MCF 10A (cell line): ENCODE measurements at regions of chr14 and their contacts with region 1.

Region 1: DNA sequence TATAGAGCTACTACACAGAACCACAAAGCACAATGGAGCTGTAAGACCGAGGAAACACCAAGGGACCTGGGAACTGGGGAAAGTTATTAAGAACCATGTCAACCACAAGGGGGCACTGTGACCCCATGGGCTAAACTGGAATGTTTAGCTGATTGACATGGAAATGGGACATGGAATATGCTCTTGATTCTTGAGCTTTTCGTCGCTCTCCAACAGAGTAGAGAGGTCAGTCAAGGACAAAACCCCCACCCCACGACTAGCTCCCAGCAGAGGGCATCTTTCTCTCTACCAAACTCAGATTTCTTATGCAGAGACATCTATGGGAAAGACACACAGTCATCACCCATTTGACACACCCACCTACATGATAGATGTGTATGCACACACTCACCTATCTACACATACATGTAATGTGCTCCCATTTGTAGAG is 10.1 kb downstream of the NDRG2 start:
- DNase-seq: peak; percentile 88
- H3K4me3 Mint-ChIP-seq: no peak overlapping the region
- H3K27ac Mint-ChIP-seq: no peak overlapping the region
- H3K4me1 Mint-ChIP-seq: peaks cover 7% of the 10 kb centered on the region
- H3K27me3 Mint-ChIP-seq: peaks cover 33% of the 10 kb centered on the region
- CTCF ChIP-seq: peak; percentile 90

Region 2: GRCh38 chr14:20427231-20428009 is 587.4 kb before region 1 on chr14:
- CTCF ChIA-PET with region 1: no interaction called
- POLR2A ChIA-PET with region 1: no interaction called
- intact Hi-C with region 1: no loop called
- DNase-seq: peak; percentile 67
- H3K4me3 Mint-ChIP-seq: no peak overlapping the region
- H3K27ac Mint-ChIP-seq: no peak overlapping the region
- H3K4me1 Mint-ChIP-seq: no peaks in the 10 kb centered on the region
- H3K27me3 Mint-ChIP-seq: no peaks in the 10 kb centered on the region
- CTCF ChIP-seq: no peak

Region 3: GRCh38 chr14:20989572-20990551 is 24.9 kb before region 1 on chr14 and contains the start of gene METTL17:
- CTCF ChIA-PET with region 1: interaction called, 213 read pairs
- POLR2A ChIA-PET with region 1: interaction called, 6 read pairs
- intact Hi-C with region 1: no loop called
- DNase-seq: peak; percentile 98
- H3K4me3 Mint-ChIP-seq: peak within 1 kb of the TSS; percentile 80
- H3K27ac Mint-ChIP-seq: peak within 1 kb of the TSS; percentile 91
- H3K4me1 Mint-ChIP-seq: peaks cover 24% of the 10 kb centered on the region
- H3K27me3 Mint-ChIP-seq: no peaks in the 10 kb centered on the region
- CTCF ChIP-seq: peak; percentile 7
- total RNA-seq, gene METTL17: 62.4 and 70.2 TPM in 2 replicates

Region 4: GRCh38 chr14:21025371-21026151 is 10.8 kb after region 1 on chr14:
- CTCF ChIA-PET with region 1: interaction called, 104 read pairs
- POLR2A ChIA-PET with region 1: interaction called, 3 read pairs
- intact Hi-C with region 1: no loop called
- DNase-seq: no peak
- H3K4me3 Mint-ChIP-seq: peak overlapping the region; percentile 51
- H3K27ac Mint-ChIP-seq: no peak overlapping the region
- H3K4me1 Mint-ChIP-seq: no peaks in the 10 kb centered on the region
- H3K27me3 Mint-ChIP-seq: peaks cover 20% of the 10 kb centered on the region
- CTCF ChIP-seq: no peak

Region 5: DNA sequence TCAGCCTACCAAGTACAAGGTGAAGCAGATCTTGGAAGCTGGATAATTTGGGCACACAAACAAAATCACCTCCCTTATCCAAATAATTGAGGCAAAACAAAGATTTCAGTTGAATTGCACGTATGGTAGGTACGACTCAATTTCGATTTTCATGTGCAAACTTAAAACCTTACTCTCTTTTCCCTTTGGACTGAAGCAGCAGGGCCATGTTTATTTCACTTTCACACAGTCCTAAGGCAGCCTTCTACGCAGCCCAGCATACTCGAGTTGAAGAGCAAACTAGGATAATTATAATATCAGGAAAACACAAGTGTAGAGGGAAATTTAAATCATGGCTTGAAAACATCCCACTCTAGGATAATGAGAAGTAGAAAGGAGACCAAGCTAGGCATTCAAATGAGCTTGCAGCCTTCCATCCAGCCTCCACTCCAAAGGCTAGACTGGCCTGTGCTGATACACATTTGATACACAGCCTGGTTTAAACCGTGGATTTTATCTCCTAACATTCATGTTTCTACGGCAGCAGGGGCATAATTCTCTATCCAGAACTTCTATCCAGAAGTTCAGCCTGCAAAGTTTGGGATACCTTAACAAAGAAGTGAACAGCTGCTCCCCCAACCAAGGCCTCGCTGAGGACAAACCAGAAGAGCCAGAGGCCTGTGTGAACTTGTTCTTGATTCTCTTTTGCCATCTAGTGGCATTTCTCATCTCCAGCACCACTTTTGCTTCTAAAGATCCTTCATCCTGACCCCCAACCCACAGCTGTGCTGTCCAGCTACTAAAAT is 25.0 kb after region 1 on chr14:
- CTCF ChIA-PET with region 1: interaction called, 391 read pairs
- POLR2A ChIA-PET with region 1: interaction called, 40 read pairs
- intact Hi-C with region 1: loop called (anchors 1 kb)
- DNase-seq: peak; percentile 69
- H3K4me3 Mint-ChIP-seq: no peak overlapping the region
- H3K27ac Mint-ChIP-seq: no peak overlapping the region
- H3K4me1 Mint-ChIP-seq: peaks cover 34% of the 10 kb centered on the region
- H3K27me3 Mint-ChIP-seq: no peaks in the 10 kb centered on the region
- CTCF ChIP-seq: peak; percentile 51

Region 6: GRCh38 chr14:21063479-21063878 is 48.7 kb after region 1 on chr14:
- CTCF ChIA-PET with region 1: interaction called, 48 read pairs
- POLR2A ChIA-PET with region 1: no interaction called
- intact Hi-C with region 1: no loop called
- DNase-seq: peak; percentile 31
- H3K4me3 Mint-ChIP-seq: no peak overlapping the region
- H3K27ac Mint-ChIP-seq: no peak overlapping the region
- H3K4me1 Mint-ChIP-seq: peaks cover 7% of the 10 kb centered on the region
- H3K27me3 Mint-ChIP-seq: peaks cover 11% of the 10 kb centered on the region
- CTCF ChIP-seq: no peak

Region 7: GRCh38 chr14:21092273-21093011 is 77.7 kb after region 1 on chr14:
- CTCF ChIA-PET with region 1: interaction called, 148 read pairs
- POLR2A ChIA-PET with region 1: interaction called, 3 read pairs
- intact Hi-C with region 1: loop called (anchors 1 kb)
- DNase-seq: peak; percentile 64
- H3K4me3 Mint-ChIP-seq: peak overlapping the region; percentile 19
- H3K27ac Mint-ChIP-seq: no peak overlapping the region
- H3K4me1 Mint-ChIP-seq: peaks cover 24% of the 10 kb centered on the region
- H3K27me3 Mint-ChIP-seq: no peaks in the 10 kb centered on the region
- CTCF ChIP-seq: peak; percentile 100